Activated T-helper 2 cell treated with anti-CD3 and anti-CD28 coated beads, Interferon-gamma antibody, Interleukin-2, Interleukin-4, amounts not matched to agents 10 μg/mL and 5 μg/mL and 100 μg/mL, durations not matched to agents 14 hours and 24 hours and 36 hours (primary cell): ENCODE measurements at regions of chr4 and their contacts with region 1.

Region 1: DNA sequence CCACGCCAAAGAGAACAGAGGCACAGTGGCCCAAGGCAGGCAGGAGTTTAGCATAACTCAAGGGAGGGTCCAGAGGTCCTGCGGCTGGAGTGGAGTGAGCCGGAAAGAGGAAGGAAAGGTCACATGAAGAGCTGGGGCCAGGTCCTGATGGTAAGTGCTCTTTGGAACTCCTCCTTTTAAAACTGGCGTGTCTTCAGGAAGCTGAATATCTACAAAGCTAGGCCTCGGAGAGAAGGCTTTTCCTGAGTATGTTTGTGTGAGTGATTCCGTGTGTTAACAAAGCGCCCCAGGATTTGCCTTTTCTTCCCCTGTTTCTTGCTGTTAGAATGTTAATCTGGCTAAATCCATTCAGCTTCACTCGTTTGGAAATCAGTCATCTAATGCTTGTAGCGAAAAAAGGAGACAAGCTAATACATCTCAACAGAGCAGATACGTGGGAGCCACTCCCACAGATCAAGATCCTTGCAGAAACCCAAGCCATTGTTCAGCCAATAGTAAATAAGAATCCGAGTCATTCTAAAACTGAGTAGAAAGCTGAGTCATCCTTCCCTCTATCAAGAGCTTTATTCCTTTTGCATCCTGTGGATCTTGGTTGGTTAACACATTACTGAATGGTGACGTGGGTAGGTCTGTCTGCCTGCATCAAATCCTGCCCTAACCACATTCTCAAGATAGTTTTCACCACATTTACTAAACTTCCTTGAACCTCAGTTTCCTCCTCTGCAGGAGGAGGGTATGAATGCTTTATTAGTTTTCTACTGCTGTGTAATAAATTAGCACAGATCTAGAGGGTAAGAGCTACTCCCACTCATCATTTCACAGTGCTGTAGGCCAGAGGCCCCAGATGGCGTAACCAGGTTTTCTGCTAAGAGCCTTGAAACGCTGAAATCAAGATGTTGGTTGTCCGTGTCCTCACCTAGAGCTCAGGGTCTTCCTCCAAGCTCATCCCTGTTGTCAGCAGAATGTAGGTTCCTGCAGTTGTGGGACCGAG is 43.2 kb upstream of the RBM47 start:
- DNase-seq: peak; percentile 63
- H3K4me3 Mint-ChIP-seq: peak overlapping the region; percentile 51
- H3K27ac Mint-ChIP-seq: peak overlapping the region; percentile 90
- H3K4me1 Mint-ChIP-seq: peaks cover 53% of the 10 kb centered on the region
- H3K27me3 Mint-ChIP-seq: no peaks in the 10 kb centered on the region

Region 2: GRCh38 chr4:40685300-40685699 is 12.5 kb after region 1 on chr4:
- intact Hi-C with region 1: loop called (anchors 1 kb)
- DNase-seq: no peak
- H3K4me3 Mint-ChIP-seq: no peak overlapping the region
- H3K27ac Mint-ChIP-seq: no peak overlapping the region
- H3K4me1 Mint-ChIP-seq: peaks cover 45% of the 10 kb centered on the region
- H3K27me3 Mint-ChIP-seq: no peaks in the 10 kb centered on the region

Region 3: GRCh38 chr4:40788331-40788730 is 115.5 kb after region 1 on chr4:
- intact Hi-C with region 1: no loop called
- DNase-seq: no peak
- H3K4me3 Mint-ChIP-seq: no peak overlapping the region
- H3K27ac Mint-ChIP-seq: no peak overlapping the region
- H3K4me1 Mint-ChIP-seq: no peaks in the 10 kb centered on the region
- H3K27me3 Mint-ChIP-seq: peaks cover 41% of the 10 kb centered on the region